IMR-90 (cell line): ENCODE measurements at regions of chr4 and their contacts with region 1.

Region 1: GRCh38 chr4:11603591-11604194 is 175.0 kb upstream of the HS3ST1 start:
- DNase-seq: no peak
- ATAC-seq: 0 out of 2 replicates have a peak, but pooled peaks have one; percentile 22
- H3K4me3 ChIP-seq: no peak overlapping the region
- H3K27ac ChIP-seq: no peak overlapping the region
- H3K4me1 ChIP-seq: peaks cover 5% of the 10 kb centered on the region
- H3K27me3 ChIP-seq: no peaks in the 10 kb centered on the region
- CTCF ChIP-seq: no peak
- POLR2A ChIP-seq: no peak
- RAD21 ChIP-seq: no peak

Region 2: GRCh38 chr4:11098461-11098860 is 505.2 kb before region 1 on chr4:
- CTCF ChIA-PET with region 1: no interaction called
- POLR2A ChIA-PET with region 1: no interaction called
- dilution Hi-C with region 1: no loop called
- in situ Hi-C with region 1: no loop called
- intact Hi-C with region 1: no loop called
- DNase-seq: no peak
- ATAC-seq: no peak
- H3K4me3 ChIP-seq: no peak overlapping the region
- H3K27ac ChIP-seq: no peak overlapping the region
- H3K4me1 ChIP-seq: no peaks in the 10 kb centered on the region
- H3K27me3 ChIP-seq: no peaks in the 10 kb centered on the region
- CTCF ChIP-seq: no peak
- POLR2A ChIP-seq: no peak
- RAD21 ChIP-seq: no peak

Region 3: DNA sequence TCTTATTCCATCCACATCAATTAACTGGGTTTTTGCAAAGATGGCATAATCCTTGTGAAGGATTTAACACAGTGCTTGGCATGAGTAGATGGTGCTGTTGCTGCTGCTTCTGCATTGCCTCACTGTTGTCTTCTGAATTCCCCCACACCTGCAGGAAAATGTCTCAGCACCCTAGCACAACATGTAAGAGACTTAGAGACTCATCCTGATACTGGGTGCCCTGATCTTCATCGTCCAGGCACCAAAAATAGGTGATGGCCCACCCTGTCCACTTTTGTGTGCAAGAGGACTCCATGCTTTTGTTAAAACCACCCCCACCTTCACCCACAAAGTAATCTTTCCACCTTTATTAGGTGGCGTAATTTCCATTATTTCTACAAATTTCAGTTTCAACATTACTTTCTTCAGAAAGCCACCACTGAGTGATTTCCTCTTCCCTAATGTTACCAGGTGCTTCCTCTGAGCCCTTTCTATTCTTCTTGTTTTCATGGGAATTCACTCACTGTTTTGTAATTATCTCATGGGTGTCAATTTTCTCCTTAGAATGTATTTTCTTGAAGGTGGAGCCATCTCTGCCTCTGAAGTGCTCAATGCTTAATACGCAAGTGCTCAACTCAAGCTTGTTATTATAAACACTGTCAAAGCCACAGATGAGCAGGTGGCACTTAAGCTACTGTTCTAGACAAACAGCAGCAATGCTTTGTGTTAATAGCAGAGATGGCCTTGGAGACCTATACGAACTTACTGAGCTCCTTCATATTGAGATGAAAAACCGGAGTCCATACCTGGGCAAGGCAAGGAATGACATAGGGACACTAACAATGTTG is 264.5 kb before region 1 on chr4:
- CTCF ChIA-PET with region 1: no interaction called
- POLR2A ChIA-PET with region 1: no interaction called
- dilution Hi-C with region 1: no loop called
- in situ Hi-C with region 1: no loop called
- intact Hi-C with region 1: no loop called
- DNase-seq: no peak
- ATAC-seq: no peak
- H3K4me3 ChIP-seq: no peak overlapping the region
- H3K27ac ChIP-seq: no peak overlapping the region
- H3K4me1 ChIP-seq: no peaks in the 10 kb centered on the region
- H3K27me3 ChIP-seq: no peaks in the 10 kb centered on the region
- CTCF ChIP-seq: no peak
- POLR2A ChIP-seq: no peak
- RAD21 ChIP-seq: no peak

Region 4: DNA sequence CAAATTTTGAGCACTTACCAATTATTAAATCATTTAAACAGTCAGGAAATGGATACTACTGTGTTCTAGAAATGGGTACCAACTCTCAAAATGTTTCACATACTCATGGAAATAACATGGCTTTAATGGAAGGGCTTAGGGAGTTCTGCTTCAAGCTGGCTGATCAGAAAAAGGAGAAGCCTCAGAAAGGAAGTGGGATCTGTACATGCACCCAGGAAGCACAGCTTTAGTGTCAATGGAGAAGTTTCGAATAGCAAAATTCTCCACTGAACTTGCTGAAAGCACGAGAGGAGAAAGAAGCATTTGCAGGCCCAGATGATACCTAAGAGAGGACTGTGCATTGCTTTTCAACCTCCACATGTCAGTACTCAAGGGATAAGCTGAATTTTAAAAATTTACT is 163.9 kb before region 1 on chr4:
- CTCF ChIA-PET with region 1: no interaction called
- POLR2A ChIA-PET with region 1: interaction called, 15 read pairs
- dilution Hi-C with region 1: no loop called
- in situ Hi-C with region 1: no loop called
- intact Hi-C with region 1: no loop called
- DNase-seq: no peak
- ATAC-seq: no peak
- H3K4me3 ChIP-seq: no peak overlapping the region
- H3K27ac ChIP-seq: no peak overlapping the region
- H3K4me1 ChIP-seq: no peaks in the 10 kb centered on the region
- H3K27me3 ChIP-seq: no peaks in the 10 kb centered on the region
- CTCF ChIP-seq: no peak
- POLR2A ChIP-seq: no peak
- RAD21 ChIP-seq: no peak